Spleen (tissue), 13 donors: ENCODE measurements at regions of chr2 and their contacts with region 1.

Region 1: GRCh38 chr2:196453613-196454047 is 185.9 kb upstream of the CCDC150 start:
- DNase-seq: no peak
- H3K4me3 ChIP-seq: no peak overlapping the region
- H3K27ac ChIP-seq: no peak overlapping the region
- H3K4me1 ChIP-seq: peaks cover 0 to 8% (median 0%) of the 10 kb centered on the region in 6 donors
- H3K27me3 ChIP-seq: peaks cover 0 to 25% (median 0%) of the 10 kb centered on the region in 7 donors
- CTCF ChIP-seq: peak in 10 of 11 experiments; percentile 24 to 76 (median 58)
- POLR2A ChIP-seq: no peak

Region 2: DNA sequence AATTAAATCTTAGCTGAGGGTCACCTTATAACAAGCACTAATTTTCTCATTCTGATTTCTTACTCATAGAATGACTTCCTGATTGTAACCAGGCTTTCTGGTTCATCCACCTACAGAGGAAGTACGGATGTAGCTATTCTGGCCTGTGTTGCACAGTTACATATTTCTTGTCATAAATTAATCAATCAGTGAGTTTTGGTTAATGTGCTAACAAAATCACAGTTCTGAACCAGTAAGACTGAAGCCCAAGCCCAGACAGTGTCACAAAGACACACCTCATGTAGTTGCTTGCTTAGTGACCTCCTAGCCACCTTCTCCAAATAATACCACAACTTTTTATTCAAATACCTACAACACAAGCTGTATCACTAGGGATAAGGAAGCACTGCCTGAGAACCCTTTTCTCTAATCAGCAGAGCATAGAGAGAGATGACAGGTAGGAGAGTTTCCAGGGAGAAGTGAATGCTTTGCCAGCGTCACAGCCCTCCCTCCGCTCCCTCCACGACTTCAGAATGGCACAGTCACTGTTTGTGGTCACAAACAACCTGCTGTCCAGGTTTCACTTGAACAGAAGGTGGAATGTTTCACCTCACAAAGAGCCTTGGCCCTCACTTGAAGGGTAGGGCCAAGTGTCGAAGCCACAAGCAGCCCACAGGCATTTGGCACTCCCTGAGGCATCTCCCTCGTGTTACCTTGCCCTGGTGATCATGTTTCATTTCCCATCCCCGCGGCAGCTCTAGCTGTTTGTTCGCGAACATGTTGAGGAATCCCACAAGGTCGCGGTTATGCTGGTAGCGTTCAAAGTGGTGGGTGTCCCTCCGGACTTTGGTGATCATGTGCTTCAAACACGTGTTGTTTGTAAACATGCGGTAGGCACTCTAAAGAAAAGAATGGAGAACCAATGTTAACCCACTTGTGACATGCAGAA is 161.5 kb before region 1 on chr2:
- intact Hi-C with region 1: loop called (anchors 5 kb)
- DNase-seq: no peak
- H3K4me3 ChIP-seq: no peak overlapping the region
- H3K27ac ChIP-seq: peak overlapping the region in 4 of 8 donors; percentile 32 to 64 (median 50)
- H3K4me1 ChIP-seq: peaks cover 8 to 69% (median 43%) of the 10 kb centered on the region in 6 donors
- H3K27me3 ChIP-seq: no peaks in the 10 kb centered on the region
- CTCF ChIP-seq: no peak
- POLR2A ChIP-seq: no peak